Activated CD4-positive, alpha-beta T cell treated with anti-CD3 and anti-CD28 coated beads for 36 hours (primary cell): ENCODE measurements at regions of chr12 and their contacts with region 1.

Region 1: DNA sequence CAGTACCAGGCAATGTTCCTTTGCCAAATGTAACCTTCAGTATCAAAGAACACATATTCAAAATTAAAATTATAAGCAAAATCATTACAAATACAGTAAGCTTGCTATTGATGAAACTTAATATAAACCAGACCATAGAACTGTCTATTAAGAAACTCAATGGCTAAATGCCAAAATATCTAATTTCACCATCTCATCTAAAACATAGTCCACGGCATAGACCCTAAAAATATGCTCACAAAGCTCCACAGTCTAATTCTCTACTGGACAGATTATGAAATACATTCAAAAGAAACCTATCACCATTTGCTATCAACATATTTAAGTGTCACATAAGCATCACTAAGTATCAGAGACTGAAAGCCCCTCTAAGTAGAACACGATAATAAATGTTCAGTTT is 25.2 kb downstream of the DUSP16 start:
- DNase-seq: no peak
- ATAC-seq: no peak
- H3K4me3 Mint-ChIP-seq: no peak overlapping the region
- H3K27ac Mint-ChIP-seq: no peak overlapping the region
- H3K4me1 Mint-ChIP-seq: peaks cover 38% of the 10 kb centered on the region
- H3K27me3 Mint-ChIP-seq: no peaks in the 10 kb centered on the region

Region 2: DNA sequence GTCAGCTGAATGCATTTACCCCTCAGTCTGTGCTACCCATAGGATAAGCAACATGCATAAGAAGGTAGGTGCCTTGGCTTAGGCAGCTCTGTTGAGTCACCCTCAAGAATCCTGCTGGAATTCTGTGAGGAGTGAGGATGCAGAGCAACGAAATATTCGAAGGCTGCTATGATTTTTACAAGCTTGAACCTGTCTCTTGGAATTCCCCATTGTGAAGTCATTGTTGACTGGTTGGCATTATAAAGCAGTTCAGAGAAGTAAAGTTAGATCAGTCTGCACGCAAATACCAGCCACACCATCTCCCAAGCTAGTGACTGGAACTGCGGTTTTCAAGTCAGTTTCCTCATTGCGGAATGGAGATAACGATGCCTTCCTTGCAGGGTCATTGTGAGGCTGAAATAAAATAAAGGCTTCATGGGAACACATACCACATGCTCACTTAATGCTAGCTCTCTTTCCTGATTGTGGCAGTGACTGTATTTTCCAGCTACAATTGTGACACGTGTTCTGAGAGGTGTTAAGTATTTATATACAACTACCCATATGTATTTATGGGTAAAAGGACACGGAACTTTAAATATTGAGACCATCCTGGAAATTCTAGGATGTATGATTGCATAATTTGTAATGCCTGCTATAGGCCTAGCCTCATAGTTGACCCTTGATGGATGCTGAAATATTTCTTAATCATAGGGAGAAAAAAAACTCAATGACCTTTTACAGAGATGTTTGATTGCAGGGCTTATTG is 791.2 kb before region 1 on chr12:
- CTCF ChIA-PET with region 1: no interaction called
- POLR2A ChIA-PET with region 1: no interaction called
- intact Hi-C with region 1: no loop called
- DNase-seq: no peak
- ATAC-seq: peak; percentile 52
- H3K4me3 Mint-ChIP-seq: no peak overlapping the region
- H3K27ac Mint-ChIP-seq: no peak overlapping the region
- H3K4me1 Mint-ChIP-seq: peaks cover 52% of the 10 kb centered on the region
- H3K27me3 Mint-ChIP-seq: no peaks in the 10 kb centered on the region

Region 3: GRCh38 chr12:12123036-12123604 is 414.3 kb before region 1 on chr12:
- CTCF ChIA-PET with region 1: no interaction called
- POLR2A ChIA-PET with region 1: no interaction called
- intact Hi-C with region 1: no loop called
- DNase-seq: no peak
- ATAC-seq: no peak
- H3K4me3 Mint-ChIP-seq: no peak overlapping the region
- H3K27ac Mint-ChIP-seq: no peak overlapping the region
- H3K4me1 Mint-ChIP-seq: no peaks in the 10 kb centered on the region
- H3K27me3 Mint-ChIP-seq: no peaks in the 10 kb centered on the region

Region 4: GRCh38 chr12:12384571-12385340 is 152.7 kb before region 1 on chr12:
- CTCF ChIA-PET with region 1: no interaction called
- POLR2A ChIA-PET with region 1: no interaction called
- intact Hi-C with region 1: no loop called
- DNase-seq: peak; percentile 76
- ATAC-seq: peak; percentile 88
- H3K4me3 Mint-ChIP-seq: no peak overlapping the region
- H3K27ac Mint-ChIP-seq: peak overlapping the region; percentile 77
- H3K4me1 Mint-ChIP-seq: peaks cover 46% of the 10 kb centered on the region
- H3K27me3 Mint-ChIP-seq: no peaks in the 10 kb centered on the region

Region 5: DNA sequence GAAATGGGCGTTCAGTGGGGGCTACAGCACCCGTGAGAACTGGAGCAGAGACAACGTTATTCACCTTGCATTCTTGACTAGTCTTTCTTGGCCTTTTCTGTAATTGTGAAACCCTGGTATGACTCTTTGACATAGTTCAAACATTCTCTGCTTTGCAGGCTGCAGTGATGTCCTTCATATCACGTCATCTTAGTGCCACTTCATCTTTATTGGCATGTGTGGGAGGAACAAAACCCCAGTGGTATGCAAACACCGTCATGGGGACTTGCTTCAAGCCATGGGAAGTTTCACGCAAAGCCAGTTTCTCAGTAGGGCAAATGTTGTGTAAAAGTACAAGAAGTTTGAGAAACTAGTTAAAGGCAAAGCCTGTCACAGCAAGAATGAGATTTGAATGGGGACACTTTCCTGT is 45.5 kb after region 1 on chr12:
- CTCF ChIA-PET with region 1: no interaction called
- POLR2A ChIA-PET with region 1: no interaction called
- intact Hi-C with region 1: loop called in 1 of 2 experiments (anchors 2 kb)
- DNase-seq: peak; percentile 78
- ATAC-seq: peak; percentile 96
- H3K4me3 Mint-ChIP-seq: no peak overlapping the region
- H3K27ac Mint-ChIP-seq: peak overlapping the region; percentile 92
- H3K4me1 Mint-ChIP-seq: peaks cover 45% of the 10 kb centered on the region
- H3K27me3 Mint-ChIP-seq: no peaks in the 10 kb centered on the region